ENCODE measurements at regions of chr1 and their contacts with region 1.

Region 1: GRCh38 chr1:161738627-161739287 is 10.8 kb upstream of the DUSP12 start:
- DNase-seq: peak; percentile 51
- H3K4me3 Mint-ChIP-seq: no peak overlapping the region
- H3K27ac Mint-ChIP-seq: no peak overlapping the region
- H3K4me1 Mint-ChIP-seq: peaks cover 36% of the 10 kb centered on the region
- H3K27me3 Mint-ChIP-seq: no peaks in the 10 kb centered on the region
- CTCF ChIP-seq: peak; percentile 44

Region 2: GRCh38 chr1:161486806-161487741 is 251.7 kb before region 1 on chr1:
- CTCF ChIA-PET with region 1: interaction called, 11 read pairs
- intact Hi-C with region 1: loop called (anchors 1 kb)
- DNase-seq: peak; percentile 58
- H3K4me3 Mint-ChIP-seq: no peak overlapping the region
- H3K27ac Mint-ChIP-seq: no peak overlapping the region
- H3K4me1 Mint-ChIP-seq: no peaks in the 10 kb centered on the region
- H3K27me3 Mint-ChIP-seq: peaks cover 60% of the 10 kb centered on the region
- CTCF ChIP-seq: peak; percentile 88

Region 3: DNA sequence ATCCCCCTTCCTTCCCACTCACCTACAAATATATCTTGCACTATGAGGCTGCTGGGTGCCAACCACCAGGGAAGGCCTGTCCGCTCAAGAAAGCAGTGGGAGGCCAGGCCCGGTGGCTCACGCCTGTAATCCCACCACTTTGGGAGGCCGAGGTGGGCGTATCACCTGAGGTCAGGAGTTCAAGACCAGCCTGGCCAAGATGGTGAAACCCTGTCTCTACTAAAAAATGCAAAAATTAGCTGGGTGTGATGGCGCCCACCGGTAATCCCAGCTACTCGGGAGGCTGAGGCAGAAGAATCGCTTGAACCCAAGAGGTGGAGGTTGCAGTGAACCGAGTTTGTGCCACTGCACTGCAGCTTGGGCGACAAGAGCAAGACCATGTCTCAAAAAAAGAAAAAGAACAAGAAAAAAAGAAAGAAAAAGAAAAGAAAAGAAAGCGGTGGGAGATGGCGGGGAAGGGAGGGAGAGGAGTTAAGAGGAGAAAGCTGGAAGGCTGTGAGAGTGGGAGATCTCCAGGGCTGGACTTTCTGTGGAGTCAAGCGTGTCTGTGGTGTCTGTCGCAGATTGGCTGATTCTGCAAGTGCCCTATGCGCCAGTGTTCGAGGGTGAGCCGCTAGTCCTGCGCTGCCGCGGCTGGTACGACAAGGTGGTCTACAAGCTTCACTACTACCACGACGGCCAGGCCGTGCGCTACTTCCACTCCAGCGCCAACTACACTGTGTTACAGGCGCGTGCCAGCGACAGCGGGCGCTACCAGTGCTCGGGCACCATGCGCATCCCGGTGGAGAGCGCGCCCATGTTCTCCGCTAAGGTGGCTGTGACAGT is 13.3 kb before region 1 on chr1:
- CTCF ChIA-PET with region 1: interaction called, 8 read pairs
- intact Hi-C with region 1: loop called (anchors 1 kb)
- DNase-seq: peak; percentile 50
- H3K4me3 Mint-ChIP-seq: peak overlapping the region; percentile 80
- H3K27ac Mint-ChIP-seq: peak overlapping the region; percentile 21
- H3K4me1 Mint-ChIP-seq: peaks cover 60% of the 10 kb centered on the region
- H3K27me3 Mint-ChIP-seq: no peaks in the 10 kb centered on the region
- CTCF ChIP-seq: no peak

Measured in Calu3 (cell line).